GM10248 (cell line): ENCODE measurements at regions of chr19 and their contacts with region 1.

Region 1: DNA sequence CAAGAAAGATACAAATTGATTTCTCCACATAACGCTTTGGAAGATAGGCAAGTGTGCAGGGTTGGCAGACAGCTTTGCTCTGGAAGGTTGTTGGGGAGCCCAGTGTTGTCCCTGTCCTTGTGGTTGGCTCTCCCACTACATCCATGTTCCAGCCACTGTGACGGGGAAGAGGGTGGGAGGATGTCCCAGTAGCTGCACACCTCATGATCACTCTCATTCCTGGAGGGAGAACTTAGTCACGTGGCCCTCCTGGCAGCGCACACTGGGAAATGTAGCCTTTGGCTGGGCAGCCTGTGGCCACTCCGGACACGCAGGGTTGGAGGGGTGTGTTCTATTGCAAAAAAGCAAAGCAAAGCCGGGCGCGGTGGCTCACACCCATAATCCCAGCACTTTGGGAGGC is 9.9 kb downstream of the POLD1 start:
- DNase-seq: no peak
- CTCF ChIP-seq: no peak

Region 2: DNA sequence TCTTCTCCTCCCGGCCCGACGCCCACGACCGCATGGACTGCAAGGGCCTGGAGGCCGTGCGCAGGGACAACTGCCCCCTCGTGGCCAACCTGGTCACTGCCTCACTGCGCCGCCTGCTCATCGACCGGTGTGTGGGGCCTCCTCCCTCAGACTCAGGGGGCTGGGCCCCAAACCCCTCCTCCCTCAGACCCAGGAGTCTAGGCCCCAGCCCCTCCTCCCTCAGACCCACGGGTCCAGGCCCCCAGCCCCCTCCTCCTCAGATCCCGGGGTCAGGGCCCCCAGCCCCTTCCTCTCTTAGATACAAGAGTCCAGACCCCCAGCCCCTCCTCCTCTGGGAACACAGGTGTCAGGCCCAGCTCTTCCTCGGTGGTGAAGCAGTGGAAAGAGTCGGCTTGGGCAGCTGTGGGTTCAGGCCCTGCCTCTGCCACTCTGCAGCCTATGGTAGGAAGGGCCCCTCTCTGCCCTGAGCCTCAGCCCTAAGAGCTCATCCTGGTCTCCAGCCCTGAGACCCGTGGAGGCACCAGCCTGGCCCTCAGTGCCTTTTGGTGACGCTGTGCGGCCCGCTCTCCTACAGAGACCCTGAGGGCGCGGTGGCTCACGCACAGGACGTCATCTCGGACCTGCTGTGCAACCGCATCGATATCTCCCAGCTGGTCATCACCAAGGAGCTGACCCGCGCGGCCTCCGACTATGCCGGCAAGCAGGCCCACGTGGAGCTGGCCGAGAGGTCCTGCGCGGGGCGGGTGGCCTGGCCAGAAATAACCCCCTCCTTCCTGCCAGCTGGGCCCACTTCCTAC is 21.0 kb after region 1 on chr19:
- CTCF ChIA-PET with region 1: interaction called, 10 read pairs
- POLR2A ChIA-PET with region 1: no interaction called
- DNase-seq: peak; percentile 90
- CTCF ChIP-seq: peak; percentile 96